ENCODE measurements at regions of chr4 and their contacts with region 1.

Region 1: DNA sequence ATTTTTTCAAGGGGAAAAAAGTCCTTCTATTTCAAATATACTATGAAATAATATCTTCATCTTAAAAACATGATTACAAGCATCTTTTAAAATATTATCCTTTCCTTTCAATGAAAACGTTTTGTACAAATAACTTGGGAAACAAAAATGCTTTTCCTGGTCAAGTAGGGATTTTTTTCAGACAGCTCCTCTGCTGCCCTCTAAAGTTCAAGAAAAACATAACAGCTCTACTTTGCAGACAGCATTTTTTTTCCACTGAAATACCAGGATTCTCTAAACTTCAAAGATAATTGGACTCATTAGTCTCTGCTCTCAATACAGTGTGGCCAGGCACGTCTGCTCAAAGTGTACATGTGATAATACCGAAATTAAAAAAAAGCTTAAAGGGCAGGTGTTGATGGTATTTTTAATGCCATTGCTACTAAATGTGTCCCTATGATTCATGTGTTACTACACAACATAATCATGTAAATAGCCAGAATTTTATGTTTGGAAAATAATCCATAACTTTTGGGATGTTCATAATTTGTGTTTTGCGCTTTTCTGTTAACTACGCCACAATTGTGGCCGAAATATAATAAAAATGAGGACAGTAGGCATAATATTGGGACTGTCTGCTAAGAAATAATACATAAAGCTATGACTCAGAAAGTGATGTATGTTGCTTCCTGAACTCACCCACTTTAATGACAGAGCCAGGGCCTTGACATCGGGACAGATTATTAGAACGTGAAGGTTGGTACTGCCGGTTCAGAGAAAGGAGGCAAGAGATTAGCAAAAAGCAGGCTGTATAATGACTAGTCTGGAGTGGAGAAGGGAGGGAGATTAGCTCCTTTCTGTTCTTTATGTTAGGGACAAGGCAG is 478.9 kb downstream of the KCNIP4 start:
- DNase-seq: no peak
- H3K4me3 ChIP-seq: no peak overlapping the region
- H3K27ac ChIP-seq: no peak overlapping the region
- H3K27me3 ChIP-seq: no peaks in the 10 kb centered on the region
- CTCF ChIP-seq: peak; percentile 47 to 83 (median 71)

Region 2: DNA sequence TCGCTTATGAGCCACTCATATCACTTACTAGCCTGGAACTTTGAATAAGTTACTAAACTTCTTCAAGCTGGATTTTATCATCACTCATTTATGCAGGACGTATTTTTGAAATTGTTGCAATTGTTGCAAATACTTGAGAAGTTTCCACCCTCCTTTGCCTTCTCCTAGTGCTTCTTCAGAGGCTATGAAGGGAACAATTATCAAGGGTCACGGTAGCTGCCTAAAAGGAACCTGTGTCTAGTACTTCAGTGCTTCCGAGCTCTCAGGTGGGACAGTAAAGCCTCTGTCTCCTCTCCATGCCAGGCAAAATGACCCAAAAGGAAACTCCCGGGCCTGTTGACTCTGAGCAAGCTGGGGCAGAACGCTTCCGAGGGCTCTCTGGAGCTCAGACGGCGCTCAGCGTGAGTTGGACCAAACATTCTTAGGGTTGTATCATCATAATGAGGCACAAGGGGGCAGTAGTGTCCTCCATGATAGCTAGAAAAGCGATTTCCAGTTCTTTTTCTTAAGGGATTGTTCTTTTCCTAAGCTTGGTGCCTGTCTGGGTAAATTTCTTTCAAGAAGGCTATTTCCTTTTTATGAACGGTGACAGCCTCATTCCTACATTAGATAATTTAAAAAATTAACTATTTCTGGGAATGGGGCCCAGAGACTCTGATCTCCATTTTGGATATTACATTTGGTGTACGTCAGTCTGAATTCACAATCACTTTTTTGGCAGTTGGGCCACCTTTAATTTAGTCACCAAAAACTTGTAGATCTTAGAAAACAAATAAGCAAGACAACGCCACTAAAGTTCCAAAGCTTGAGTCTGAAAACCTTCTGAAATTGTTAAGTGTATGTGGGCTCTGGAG is 696.3 kb before region 1 on chr4:
- intact Hi-C with region 1: loop called (anchors 2 to 5 kb)
- DNase-seq: peak in 5 of 10 donors; percentile 8 to 61 (median 33)
- H3K4me3 ChIP-seq: peak overlapping the region in 15 of 59 donors; percentile 1 to 28 (median 15)
- H3K27ac ChIP-seq: no peak overlapping the region
- H3K27me3 ChIP-seq: no peaks in the 10 kb centered on the region
- CTCF ChIP-seq: peak; percentile 41 to 93 (median 77)

Region 3: DNA sequence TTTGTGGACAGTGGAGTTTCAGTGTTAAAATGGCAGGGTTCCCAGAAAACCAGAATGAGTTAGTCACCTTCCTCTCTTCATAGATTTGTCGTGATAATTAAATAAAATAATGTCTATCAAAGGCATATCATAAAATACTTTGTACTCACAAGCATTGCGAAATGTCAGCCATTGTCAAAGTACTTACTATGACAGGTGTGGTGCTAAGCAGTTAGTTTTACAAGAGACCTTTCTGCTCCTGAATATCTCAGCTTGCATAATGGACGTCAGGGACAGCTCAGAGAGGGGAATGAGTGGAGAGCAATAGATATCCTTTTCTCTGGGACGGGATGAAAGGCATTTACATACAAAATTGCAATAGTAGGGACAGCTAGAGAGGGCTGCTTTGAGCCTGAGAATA is 82.0 kb before region 1 on chr4:
- intact Hi-C with region 1: loop called in 1 of 2 experiments (anchors 5 kb)
- DNase-seq: no peak
- H3K4me3 ChIP-seq: no peak overlapping the region
- H3K27ac ChIP-seq: no peak overlapping the region
- H3K27me3 ChIP-seq: no peaks in the 10 kb centered on the region
- CTCF ChIP-seq: no peak

Region 4: DNA sequence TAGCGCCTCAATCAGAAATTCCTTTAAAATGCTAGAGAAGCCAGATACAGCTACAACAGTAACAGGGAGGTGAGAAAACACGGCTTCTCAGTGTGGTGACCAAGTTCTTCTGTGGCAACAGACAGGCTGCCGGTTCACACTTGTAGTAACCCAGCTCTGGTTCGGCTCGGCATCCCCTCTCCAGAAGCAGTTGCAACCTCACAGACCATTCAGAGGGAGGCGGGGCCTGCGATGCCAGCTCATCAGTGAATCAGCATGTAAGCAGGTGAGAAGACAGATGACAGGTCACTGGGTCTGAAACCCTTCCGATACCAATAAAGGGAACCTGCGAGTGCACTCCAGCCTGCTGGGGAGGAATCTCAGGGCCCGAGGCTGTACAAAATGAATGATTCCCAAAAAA is 227.9 kb after region 1 on chr4:
- intact Hi-C with region 1: no loop called
- DNase-seq: peak in 5 of 10 donors; percentile 12 to 76 (median 46)
- H3K4me3 ChIP-seq: peak overlapping the region in 4 of 59 donors; percentile 2 to 22 (median 6)
- H3K27ac ChIP-seq: no peak overlapping the region
- H3K27me3 ChIP-seq: no peaks in the 10 kb centered on the region
- CTCF ChIP-seq: no peak